ENCODE measurements at regions of chrX and their contacts with region 1.

Region 1: GRCh38 chrX:46325312-46325877 is 219.8 kb downstream of the ZNF674 start:
- DNase-seq: peak; percentile 77
- H3K4me3 Mint-ChIP-seq: peak overlapping the region; percentile 23
- H3K27ac Mint-ChIP-seq: peak overlapping the region; percentile 79
- H3K4me1 Mint-ChIP-seq: peaks cover 62% of the 10 kb centered on the region
- H3K27me3 Mint-ChIP-seq: no peaks in the 10 kb centered on the region

Region 2: GRCh38 chrX:45621376-45622041 is 703.9 kb before region 1 on chrX:
- CTCF ChIA-PET with region 1: no interaction called
- POLR2A ChIA-PET with region 1: no interaction called
- intact Hi-C with region 1: loop called (anchors 5 kb)
- DNase-seq: peak; percentile 31
- H3K4me3 Mint-ChIP-seq: no peak overlapping the region
- H3K27ac Mint-ChIP-seq: peak overlapping the region; percentile 83
- H3K4me1 Mint-ChIP-seq: peaks cover 23% of the 10 kb centered on the region
- H3K27me3 Mint-ChIP-seq: peaks cover 2% of the 10 kb centered on the region

Region 3: GRCh38 chrX:46208225-46208854 is 117.1 kb before region 1 on chrX:
- CTCF ChIA-PET with region 1: no interaction called
- POLR2A ChIA-PET with region 1: no interaction called
- intact Hi-C with region 1: loop called (anchors 10 kb)
- DNase-seq: no peak
- H3K4me3 Mint-ChIP-seq: no peak overlapping the region
- H3K27ac Mint-ChIP-seq: no peak overlapping the region
- H3K4me1 Mint-ChIP-seq: peaks cover 32% of the 10 kb centered on the region
- H3K27me3 Mint-ChIP-seq: no peaks in the 10 kb centered on the region

Region 4: GRCh38 chrX:46294239-46294638 is 31.2 kb before region 1 on chrX:
- CTCF ChIA-PET with region 1: no interaction called
- POLR2A ChIA-PET with region 1: no interaction called
- intact Hi-C with region 1: no loop called
- DNase-seq: no peak
- H3K4me3 Mint-ChIP-seq: no peak overlapping the region
- H3K27ac Mint-ChIP-seq: no peak overlapping the region
- H3K4me1 Mint-ChIP-seq: no peaks in the 10 kb centered on the region
- H3K27me3 Mint-ChIP-seq: no peaks in the 10 kb centered on the region

Region 5: GRCh38 chrX:46310815-46311497 is 14.4 kb before region 1 on chrX:
- CTCF ChIA-PET with region 1: no interaction called
- POLR2A ChIA-PET with region 1: interaction called, 4 read pairs
- intact Hi-C with region 1: loop called (anchors 1 kb)
- DNase-seq: no peak
- H3K4me3 Mint-ChIP-seq: peak overlapping the region; percentile 30
- H3K27ac Mint-ChIP-seq: peak overlapping the region; percentile 7
- H3K4me1 Mint-ChIP-seq: peaks cover 25% of the 10 kb centered on the region
- H3K27me3 Mint-ChIP-seq: no peaks in the 10 kb centered on the region

Region 6: DNA sequence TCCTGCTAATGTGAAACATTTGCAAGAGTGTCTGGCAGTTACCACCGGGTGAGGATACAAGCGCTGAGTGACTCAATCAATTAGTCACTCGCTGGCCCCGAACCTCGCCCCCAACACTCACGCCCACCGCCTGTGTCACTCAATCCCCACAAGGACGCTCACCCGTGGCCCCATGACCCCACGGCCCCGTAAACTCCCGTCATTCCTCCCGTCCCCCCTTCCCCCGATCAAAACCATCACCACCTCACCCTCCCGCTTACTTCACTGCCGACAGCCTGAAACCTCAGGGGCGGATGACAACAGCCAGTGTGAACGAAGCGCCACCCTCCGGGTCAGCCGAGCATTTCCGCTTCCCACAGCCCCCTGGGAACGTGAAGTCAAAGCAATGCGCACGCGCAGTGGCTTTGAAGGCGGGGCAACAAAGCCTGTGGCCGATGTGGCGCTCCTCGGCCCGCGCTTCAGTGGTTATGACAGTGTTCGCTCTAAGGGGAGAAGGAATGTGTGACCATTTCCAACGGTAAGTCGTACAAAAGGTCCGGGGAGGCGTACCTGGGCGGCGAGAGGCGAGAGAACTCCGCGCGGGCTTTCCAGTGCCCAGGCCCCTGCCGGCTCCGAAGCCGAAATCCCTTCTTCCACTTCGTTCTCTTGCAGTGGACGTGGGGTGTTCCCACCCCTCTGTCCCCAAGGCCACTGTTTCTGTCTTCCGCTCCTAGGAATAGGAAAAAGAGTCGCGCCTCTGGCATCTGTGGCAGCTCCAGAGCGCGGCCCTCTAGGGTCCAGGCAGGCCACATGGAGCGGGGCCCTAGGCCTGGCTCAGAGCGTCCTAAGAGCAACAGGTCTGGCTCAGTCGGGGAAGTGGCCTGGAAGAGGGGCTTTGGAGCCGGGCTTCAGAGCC is 220.0 kb after region 1 on chrX and contains the start of gene ZNF674:
- CTCF ChIA-PET with region 1: no interaction called
- POLR2A ChIA-PET with region 1: no interaction called
- intact Hi-C with region 1: loop called (anchors 10 kb)
- DNase-seq: peak; percentile 95
- H3K4me3 Mint-ChIP-seq: peak within 1 kb of the TSS; percentile 92
- H3K27ac Mint-ChIP-seq: peak within 1 kb of the TSS; percentile 97
- H3K4me1 Mint-ChIP-seq: peaks cover 25% of the 10 kb centered on the region
- H3K27me3 Mint-ChIP-seq: no peaks in the 10 kb centered on the region
- total RNA-seq, gene ZNF674: 2.6 to 3.0 TPM

Measured in activated CD4-positive, alpha-beta memory T cell treated with anti-CD3 and anti-CD28 coated beads for 36 hours (primary cell).